B cell (primary cell): ENCODE measurements at regions of chr3 and their contacts with region 1.

Region 1: DNA sequence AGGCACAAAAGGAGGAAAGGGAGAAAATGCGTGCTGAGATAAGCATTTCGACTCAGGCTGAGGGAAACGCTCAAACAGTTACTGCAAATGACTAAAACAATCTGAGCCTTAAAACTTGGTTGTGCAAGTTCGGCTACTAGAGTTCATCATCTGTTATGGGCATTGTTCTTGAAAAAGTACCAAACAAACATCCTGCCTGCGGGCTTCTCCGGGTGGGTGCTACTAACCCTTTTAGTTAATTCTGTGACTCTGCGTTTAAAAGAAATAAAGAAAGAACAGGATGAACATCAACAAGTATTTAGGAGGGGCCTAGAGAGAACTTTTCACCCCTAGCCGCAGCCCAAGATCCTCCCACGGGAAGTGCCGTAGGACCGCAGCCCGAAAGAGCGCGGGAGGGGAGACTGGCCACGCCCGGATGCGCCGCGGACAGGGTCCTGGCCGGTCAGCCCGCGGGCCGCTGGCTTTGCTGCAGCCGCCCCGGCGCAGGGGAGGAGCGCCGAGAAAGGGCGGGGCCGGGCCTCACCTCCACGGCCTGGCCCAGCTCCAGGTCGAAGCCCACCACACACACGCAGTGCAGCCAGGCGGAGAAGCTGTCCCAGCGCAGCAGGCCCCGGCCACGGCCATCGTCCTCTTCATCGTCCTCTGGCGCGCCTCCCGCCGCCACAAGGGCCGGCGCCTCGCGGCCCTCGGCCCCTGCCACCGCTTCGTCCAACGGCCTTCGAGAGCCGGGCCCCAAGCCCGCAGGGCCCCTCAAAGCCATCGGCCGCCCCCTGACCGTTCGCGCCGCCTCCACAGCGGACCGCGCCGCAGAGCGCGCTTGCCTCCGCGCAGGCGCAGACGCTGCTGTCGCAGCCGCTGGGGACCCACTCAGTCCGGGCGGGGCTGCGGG is at the start of gene DENND6A:
- DNase-seq: peak; percentile 96
- ATAC-seq: peak; percentile 89
- H3K4me3 ChIP-seq: peak within 1 kb of the TSS; percentile 60 to 93 (median 91)
- H3K4me3 Mint-ChIP-seq: peak within 1 kb of the TSS; percentile 91
- H3K27ac ChIP-seq: peak within 1 kb of the TSS; percentile 57 to 80
- H3K27ac Mint-ChIP-seq: peak within 1 kb of the TSS; percentile 90
- H3K4me1 ChIP-seq: peaks cover 23 to 30% of the 10 kb centered on the region in 2 donors
- H3K4me1 Mint-ChIP-seq: peaks cover 37% of the 10 kb centered on the region
- H3K27me3 ChIP-seq: no peaks in the 10 kb centered on the region
- H3K27me3 Mint-ChIP-seq: no peaks in the 10 kb centered on the region
- CTCF ChIP-seq: no peak
- total RNA-seq, gene DENND6A: 31.5 and 37.6 TPM in 2 replicates

Region 2: GRCh38 chr3:57068437-57069089 is 623.9 kb before region 1 on chr3:
- CTCF ChIA-PET with region 1: no interaction called
- POLR2A ChIA-PET with region 1: no interaction called
- intact Hi-C with region 1: loop called (anchors 2 kb)
- DNase-seq: peak; percentile 92
- ATAC-seq: peak; percentile 99
- H3K4me3 ChIP-seq: peak overlapping the region in 1 of 5 experiments; percentile 34
- H3K4me3 Mint-ChIP-seq: peak overlapping the region; percentile 74
- H3K27ac ChIP-seq: peak overlapping the region in 1 of 2 donors; percentile 21
- H3K27ac Mint-ChIP-seq: peak overlapping the region; percentile 80
- H3K4me1 ChIP-seq: peaks cover 18 to 22% of the 10 kb centered on the region in 2 donors
- H3K4me1 Mint-ChIP-seq: peaks cover 21% of the 10 kb centered on the region
- H3K27me3 ChIP-seq: peaks cover 0 to 46% (median 21%) of the 10 kb centered on the region in 4 experiments
- H3K27me3 Mint-ChIP-seq: peaks cover 42% of the 10 kb centered on the region
- CTCF ChIP-seq: no peak

Region 3: GRCh38 chr3:57227204-57227929 is 465.1 kb before region 1 on chr3 and contains the start of gene APPL1:
- CTCF ChIA-PET with region 1: no interaction called
- POLR2A ChIA-PET with region 1: no interaction called
- intact Hi-C with region 1: loop called (anchors 5 kb)
- DNase-seq: peak; percentile 92
- ATAC-seq: peak; percentile 95
- H3K4me3 ChIP-seq: peak within 1 kb of the TSS; percentile 69 to 91 (median 77)
- H3K4me3 Mint-ChIP-seq: peak within 1 kb of the TSS; percentile 94
- H3K27ac ChIP-seq: peak within 1 kb of the TSS; percentile 55 to 79
- H3K27ac Mint-ChIP-seq: peak within 1 kb of the TSS; percentile 91
- H3K4me1 ChIP-seq: peaks cover 19 to 23% of the 10 kb centered on the region in 2 donors
- H3K4me1 Mint-ChIP-seq: peaks cover 38% of the 10 kb centered on the region
- H3K27me3 ChIP-seq: no peaks in the 10 kb centered on the region
- H3K27me3 Mint-ChIP-seq: no peaks in the 10 kb centered on the region
- CTCF ChIP-seq: no peak
- total RNA-seq, gene APPL1: 59.8 and 69.5 TPM in 2 replicates

Region 4: GRCh38 chr3:57597122-57597923 is 95.2 kb before region 1 on chr3 and contains the start of gene ARF4:
- CTCF ChIA-PET with region 1: no interaction called
- POLR2A ChIA-PET with region 1: no interaction called
- intact Hi-C with region 1: loop called (anchors 1 kb)
- DNase-seq: peak; percentile 100
- ATAC-seq: peak; percentile 88
- H3K4me3 ChIP-seq: peak within 1 kb of the TSS; percentile 67 to 99 (median 90)
- H3K4me3 Mint-ChIP-seq: peak within 1 kb of the TSS; percentile 96
- H3K27ac ChIP-seq: peak within 1 kb of the TSS; percentile 98
- H3K27ac Mint-ChIP-seq: peak within 1 kb of the TSS; percentile 97
- H3K4me1 ChIP-seq: peaks cover 29 to 34% of the 10 kb centered on the region in 2 donors
- H3K4me1 Mint-ChIP-seq: peaks cover 47% of the 10 kb centered on the region
- H3K27me3 ChIP-seq: no peaks in the 10 kb centered on the region
- H3K27me3 Mint-ChIP-seq: no peaks in the 10 kb centered on the region
- CTCF ChIP-seq: peak; percentile 17
- total RNA-seq, gene ARF4: 37.5 and 38.1 TPM in 2 replicates

Region 5: DNA sequence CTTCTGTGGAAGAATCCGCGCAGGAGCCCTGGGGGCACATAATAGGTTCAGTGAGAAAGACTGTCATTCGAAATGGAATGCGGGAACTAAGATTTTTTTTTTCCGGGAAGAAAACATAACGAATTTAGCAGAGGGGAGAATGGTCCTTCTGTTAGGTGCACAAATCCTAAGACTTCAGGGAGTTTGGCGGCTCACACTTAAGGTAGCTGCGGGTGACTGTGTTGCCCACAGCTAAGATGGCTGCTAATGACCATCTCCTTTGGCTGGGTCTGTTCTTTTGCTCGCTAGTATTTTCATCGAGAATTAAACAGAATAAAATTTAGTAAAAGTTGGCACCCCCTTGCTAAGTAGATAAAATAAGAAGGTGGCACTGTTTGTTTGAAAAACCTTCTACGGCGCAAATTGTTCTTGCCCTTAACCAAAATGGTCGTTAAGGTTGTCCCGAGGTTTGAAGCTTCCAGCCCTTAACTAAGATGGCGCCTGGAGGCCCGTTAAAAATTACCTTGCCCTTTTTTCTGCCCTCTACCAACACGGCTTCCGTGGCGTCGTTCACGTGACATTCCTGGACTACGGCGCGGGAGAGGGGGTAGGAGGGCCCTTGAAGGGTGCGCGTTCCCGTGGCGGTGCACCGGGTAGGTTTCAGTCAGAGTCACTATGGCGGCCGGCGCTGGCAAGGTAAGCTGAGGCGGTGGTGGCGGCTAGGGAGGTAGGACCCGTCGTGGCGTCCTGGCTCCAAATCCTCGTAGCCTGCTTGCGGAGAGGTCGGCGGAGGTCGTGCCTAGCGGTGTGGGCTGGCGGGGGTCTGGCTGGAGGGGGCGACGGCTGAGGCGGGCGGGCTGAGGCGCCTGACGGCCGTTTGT is 63.4 kb after region 1 on chr3 and contains the start of gene SLMAP:
- CTCF ChIA-PET with region 1: interaction called, 3 read pairs
- POLR2A ChIA-PET with region 1: interaction called, 9 read pairs
- intact Hi-C with region 1: loop called (anchors 1 kb)
- DNase-seq: peak; percentile 96
- ATAC-seq: peak; percentile 93
- H3K4me3 ChIP-seq: peak within 1 kb of the TSS; percentile 77 to 99 (median 95)
- H3K4me3 Mint-ChIP-seq: peak within 1 kb of the TSS; percentile 99
- H3K27ac ChIP-seq: peak within 1 kb of the TSS; percentile 56 to 93
- H3K27ac Mint-ChIP-seq: peak within 1 kb of the TSS; percentile 93
- H3K4me1 ChIP-seq: peaks cover 23 to 26% of the 10 kb centered on the region in 2 donors
- H3K4me1 Mint-ChIP-seq: peaks cover 30% of the 10 kb centered on the region
- H3K27me3 ChIP-seq: no peaks in the 10 kb centered on the region
- H3K27me3 Mint-ChIP-seq: no peaks in the 10 kb centered on the region
- CTCF ChIP-seq: no peak
- total RNA-seq, gene SLMAP: 67.2 and 70.8 TPM in 2 replicates

Region 6: DNA sequence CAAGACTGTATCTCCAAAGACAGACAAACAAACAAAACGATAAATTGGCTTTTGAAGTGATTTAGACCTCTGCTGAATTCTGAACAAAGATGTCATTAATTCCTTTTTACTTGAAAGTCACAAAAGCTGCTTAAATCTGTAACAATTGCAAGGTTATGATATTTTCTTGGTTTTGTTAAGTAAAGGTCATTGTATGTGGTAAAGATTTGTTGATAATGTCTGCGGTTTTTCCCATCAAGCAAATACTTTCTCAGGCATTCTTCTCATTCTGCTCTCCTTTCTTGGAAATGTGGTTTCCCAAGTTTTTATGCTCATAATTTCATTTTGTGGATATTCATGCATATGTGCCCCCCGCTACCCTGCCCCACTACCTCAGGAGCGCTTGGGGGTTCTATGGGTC is 180.1 kb after region 1 on chr3:
- CTCF ChIA-PET with region 1: no interaction called
- POLR2A ChIA-PET with region 1: no interaction called
- intact Hi-C with region 1: no loop called
- DNase-seq: no peak
- ATAC-seq: no peak
- H3K4me3 ChIP-seq: no peak overlapping the region
- H3K4me3 Mint-ChIP-seq: no peak overlapping the region
- H3K27ac ChIP-seq: no peak overlapping the region
- H3K27ac Mint-ChIP-seq: no peak overlapping the region
- H3K4me1 ChIP-seq: no peaks in the 10 kb centered on the region
- H3K4me1 Mint-ChIP-seq: no peaks in the 10 kb centered on the region
- H3K27me3 ChIP-seq: no peaks in the 10 kb centered on the region
- H3K27me3 Mint-ChIP-seq: no peaks in the 10 kb centered on the region
- CTCF ChIP-seq: no peak